ENCODE measurements at regions of chrX and their contacts with region 1.

Region 1: GRCh38 chrX:136767104-136767941 is 13.4 kb downstream of the ARHGEF6 start:
- DNase-seq: peak; percentile 59
- ATAC-seq: peak; percentile 73
- H3K4me3 ChIP-seq: peak overlapping the region; percentile 92
- H3K27ac ChIP-seq: peak overlapping the region; percentile 44
- H3K4me1 ChIP-seq: peaks cover 20% of the 10 kb centered on the region
- H3K27me3 ChIP-seq: no peaks in the 10 kb centered on the region
- CTCF ChIP-seq: peak; percentile 46

Region 2: DNA sequence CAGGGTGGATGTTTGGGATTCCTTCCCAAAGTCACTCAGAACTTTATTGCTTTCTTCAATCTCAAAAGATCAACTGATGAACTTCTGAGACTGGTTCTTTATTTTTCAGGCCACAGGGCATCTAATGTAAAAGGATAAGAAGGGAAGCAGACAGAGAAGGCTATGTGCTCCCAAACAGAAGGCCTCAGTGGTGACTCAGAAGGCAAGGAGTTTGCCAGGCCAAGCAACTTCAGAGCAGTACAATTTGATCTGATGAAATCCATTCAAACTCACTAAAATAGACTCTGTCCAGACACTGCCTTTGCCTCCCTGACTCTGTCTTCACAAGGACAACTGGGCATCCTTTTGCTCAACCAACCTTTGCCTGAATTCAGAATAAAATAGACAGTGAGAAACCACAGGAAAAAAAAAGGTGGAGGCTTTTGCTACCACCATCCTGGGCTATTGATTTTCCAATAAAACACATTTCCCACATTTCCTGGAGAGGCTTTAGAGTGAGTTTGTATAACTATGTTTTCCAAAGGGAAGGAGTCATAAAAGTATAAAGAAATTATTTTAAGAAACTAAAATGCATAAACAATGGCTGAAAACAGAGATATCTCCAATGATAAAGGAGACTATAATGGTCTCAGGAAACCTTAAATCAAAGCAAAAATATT is 41.7 kb before region 1 on chrX:
- CTCF ChIA-PET with region 1: no interaction called
- POLR2A ChIA-PET with region 1: no interaction called
- intact Hi-C with region 1: loop called (anchors 5 kb)
- DNase-seq: peak; percentile 50
- ATAC-seq: peak; percentile 91
- H3K4me3 ChIP-seq: no peak overlapping the region
- H3K27ac ChIP-seq: 0 out of 2 replicates have a peak overlapping the region, but pooled peaks have one; percentile 18
- H3K4me1 ChIP-seq: peaks cover 14% of the 10 kb centered on the region
- H3K27me3 ChIP-seq: no peaks in the 10 kb centered on the region
- CTCF ChIP-seq: no peak

Region 3: DNA sequence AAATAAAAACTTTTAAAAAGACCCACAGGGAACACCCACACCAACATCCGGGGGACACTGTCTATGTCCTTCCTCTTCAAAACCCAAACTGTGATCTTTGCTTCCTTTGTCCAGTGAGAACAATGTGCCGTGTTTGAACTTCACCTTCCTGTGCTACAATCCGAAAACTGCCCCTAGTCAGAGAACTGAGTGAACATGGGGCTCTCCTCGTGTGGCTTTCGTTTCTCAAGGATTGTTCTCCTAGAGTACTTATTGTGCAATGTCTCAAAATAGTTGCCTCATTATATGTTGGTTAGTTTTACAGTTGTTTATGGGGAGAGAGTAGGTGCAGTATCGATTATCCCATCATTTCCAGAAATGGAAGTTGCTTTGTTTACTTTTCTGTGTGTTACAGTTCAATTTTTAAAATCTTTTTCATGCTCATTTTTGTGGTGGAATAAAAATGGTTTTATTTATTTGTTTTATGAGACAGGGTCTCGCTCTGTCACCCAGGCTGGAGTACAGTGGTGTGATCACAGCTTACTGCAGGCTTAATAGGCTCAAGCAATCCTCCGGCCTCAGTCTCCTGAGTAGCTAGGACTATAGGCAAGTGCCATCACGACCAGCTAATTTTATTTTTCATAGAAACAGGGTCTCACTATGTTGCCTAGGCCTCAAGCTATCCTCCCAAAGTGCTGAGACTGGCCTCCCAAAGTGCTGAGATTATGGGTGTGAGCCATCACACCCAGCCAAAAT is 83.3 kb after region 1 on chrX:
- CTCF ChIA-PET with region 1: no interaction called
- POLR2A ChIA-PET with region 1: no interaction called
- intact Hi-C with region 1: loop called (anchors 5 kb)
- DNase-seq: no peak
- ATAC-seq: peak; percentile 43; the same call in 1 of the 2 replicates
- H3K4me3 ChIP-seq: no peak overlapping the region
- H3K27ac ChIP-seq: no peak overlapping the region
- H3K4me1 ChIP-seq: no peaks in the 10 kb centered on the region
- H3K27me3 ChIP-seq: no peaks in the 10 kb centered on the region
- CTCF ChIP-seq: no peak

Region 4: GRCh38 chrX:136880452-136881013 is 113.2 kb after region 1 on chrX and contains the start of gene RBMX:
- CTCF ChIA-PET with region 1: no interaction called
- POLR2A ChIA-PET with region 1: interaction called, 13 read pairs
- intact Hi-C with region 1: no loop called
- DNase-seq: peak; percentile 92
- ATAC-seq: peak; percentile 95
- H3K4me3 ChIP-seq: peak within 1 kb of the TSS; percentile 93
- H3K27ac ChIP-seq: peak within 1 kb of the TSS; percentile 66
- H3K4me1 ChIP-seq: peaks cover 4% of the 10 kb centered on the region; the same call in 1 of the 2 replicates
- H3K27me3 ChIP-seq: no peaks in the 10 kb centered on the region
- CTCF ChIP-seq: no peak
- total RNA-seq, gene RBMX: 278 and 288 TPM in 2 replicates

Measured in PC-3 (cell line).